Esophagus squamous epithelium (tissue), 5 donors: ENCODE measurements at regions of chr1 and their contacts with region 1.

Region 1: GRCh38 chr1:155093911-155094621 is 15.4 kb downstream of the EFNA3 start:
- DNase-seq: no peak
- H3K4me3 ChIP-seq: no peak overlapping the region
- H3K27ac ChIP-seq: peak overlapping the region in 3 of 4 donors; percentile 38 to 60 (median 42)
- H3K4me1 ChIP-seq: peaks cover 13 to 25% (median 19%) of the 10 kb centered on the region in 3 donors
- H3K27me3 ChIP-seq: peaks cover 0 to 7% (median 0%) of the 10 kb centered on the region in 4 donors
- CTCF ChIP-seq: peak in 5 of 6 experiments; percentile 35 to 60 (median 50)
- POLR2A ChIP-seq: no peak

Region 2: DNA sequence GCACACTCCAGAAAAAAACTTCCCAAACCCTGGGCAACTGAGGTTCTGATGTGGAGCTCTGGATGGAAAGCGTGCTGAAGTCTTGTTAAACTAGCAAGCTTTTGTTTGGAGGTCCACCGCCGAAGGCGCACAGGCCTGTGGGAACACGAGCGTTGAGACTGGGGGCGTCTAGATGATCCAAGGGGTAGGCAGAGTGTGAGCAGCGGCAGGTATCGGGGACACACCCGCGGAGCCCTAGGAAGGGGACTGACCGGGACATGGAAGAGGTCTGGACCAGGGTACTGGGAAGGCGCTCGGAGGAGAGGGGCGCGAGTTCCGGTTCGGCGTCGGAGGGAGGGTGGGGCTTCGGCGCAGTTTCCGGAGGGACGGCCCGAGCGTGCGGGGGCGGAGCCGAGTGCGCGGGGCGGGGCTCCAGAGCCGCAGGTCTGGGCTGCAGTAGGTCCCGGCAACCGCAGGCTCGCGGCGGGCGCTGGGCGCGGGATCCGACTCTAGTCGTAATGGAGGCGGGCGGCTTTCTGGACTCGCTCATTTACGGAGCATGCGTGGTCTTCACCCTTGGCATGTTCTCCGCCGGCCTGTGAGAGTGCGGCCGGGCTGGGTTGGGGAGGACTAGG is 41.5 kb after region 1 on chr1 and contains the start of gene SLC50A1:
- intact Hi-C with region 1: no loop called
- DNase-seq: peak; percentile 53
- H3K4me3 ChIP-seq: peak within 1 kb of the TSS; percentile 55 to 85 (median 76)
- H3K27ac ChIP-seq: peak within 1 kb of the TSS; percentile 97 to 100 (median 99)
- H3K4me1 ChIP-seq: peaks cover 25 to 93% (median 56%) of the 10 kb centered on the region in 3 donors
- H3K27me3 ChIP-seq: no peaks in the 10 kb centered on the region
- CTCF ChIP-seq: peak; percentile 3 to 75 (median 50)
- POLR2A ChIP-seq: peak in 3 of 4 donors; percentile 25 to 96 (median 86)
- total RNA-seq, gene SLC50A1: 21.4 to 27.2 (median 26.0) TPM

Region 3: GRCh38 chr1:155167166-155168104 is 73.4 kb after region 1 on chr1:
- intact Hi-C with region 1: loop called (anchors 2 kb)
- DNase-seq: no peak
- H3K4me3 ChIP-seq: peak overlapping the region in 1 of 4 donors; percentile 45
- H3K27ac ChIP-seq: peak overlapping the region in 3 of 4 donors; percentile 34 to 79 (median 65)
- H3K4me1 ChIP-seq: peaks cover 9 to 39% (median 18%) of the 10 kb centered on the region in 3 donors
- H3K27me3 ChIP-seq: peaks cover 0 to 11% (median 0%) of the 10 kb centered on the region in 4 donors
- CTCF ChIP-seq: peak; percentile 82 to 97 (median 94)
- POLR2A ChIP-seq: no peak